T-cell (primary cell): ENCODE measurements at regions of chr4 and their contacts with region 1.

Region 1: GRCh38 chr4:183011213-183011907 is 87.7 kb upstream of the WWC2 start:
- DNase-seq: no peak
- ATAC-seq: no peak
- H3K4me3 ChIP-seq: no peak overlapping the region
- H3K4me3 Mint-ChIP-seq: no peak overlapping the region
- H3K27ac ChIP-seq: no peak overlapping the region
- H3K27ac Mint-ChIP-seq: no peak overlapping the region
- H3K4me1 ChIP-seq: no peaks in the 10 kb centered on the region
- H3K4me1 Mint-ChIP-seq: no peaks in the 10 kb centered on the region
- H3K27me3 ChIP-seq: peaks cover 0 to 12% of the 10 kb centered on the region in 2 experiments
- H3K27me3 Mint-ChIP-seq: peaks cover 10 to 23% of the 10 kb centered on the region in 2 donors

Region 2: GRCh38 chr4:183816882-183817509 is 805.6 kb after region 1 on chr4:
- CTCF ChIA-PET with region 1: no interaction called
- POLR2A ChIA-PET with region 1: interaction called in 1 of 2 experiments, 17 read pairs
- DNase-seq: no peak
- ATAC-seq: no peak
- H3K4me3 ChIP-seq: no peak overlapping the region
- H3K4me3 Mint-ChIP-seq: no peak overlapping the region
- H3K27ac ChIP-seq: no peak overlapping the region
- H3K27ac Mint-ChIP-seq: no peak overlapping the region
- H3K4me1 ChIP-seq: no peaks in the 10 kb centered on the region
- H3K4me1 Mint-ChIP-seq: no peaks in the 10 kb centered on the region
- H3K27me3 ChIP-seq: peaks cover 0 to 11% of the 10 kb centered on the region in 2 experiments
- H3K27me3 Mint-ChIP-seq: peaks cover 11% of the 10 kb centered on the region in 2 donors